Activated CD8-positive, alpha-beta T cell treated with anti-CD3 and anti-CD28 coated beads for 36 hours (primary cell): ENCODE measurements at regions of chr3 and their contacts with region 1.

Region 1: DNA sequence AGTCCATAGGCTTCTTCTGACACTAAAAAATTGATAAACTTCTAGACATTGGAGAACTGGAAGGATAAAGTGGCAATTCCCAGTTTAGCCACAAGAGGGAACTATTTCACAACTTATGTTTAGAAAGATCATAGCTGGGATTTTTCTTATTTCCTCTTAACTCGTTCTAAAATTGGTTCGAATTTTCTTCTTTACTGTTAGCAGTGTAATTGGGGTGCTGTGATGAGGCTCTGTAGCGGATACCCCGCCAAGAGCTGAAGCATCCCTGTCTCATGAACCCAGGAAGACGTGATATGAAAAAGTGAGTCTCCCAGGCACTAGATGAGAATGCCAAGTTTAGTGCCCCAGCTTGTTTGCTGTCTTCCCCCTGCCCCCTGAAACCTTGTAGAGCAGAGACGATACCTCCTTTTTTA is 85.1 kb downstream of the PDCD6IP start:
- DNase-seq: peak; percentile 5
- ATAC-seq: peak; percentile 29
- H3K4me3 Mint-ChIP-seq: no peak overlapping the region
- H3K27ac Mint-ChIP-seq: no peak overlapping the region
- H3K4me1 Mint-ChIP-seq: peaks cover 4% of the 10 kb centered on the region
- H3K27me3 Mint-ChIP-seq: peaks cover 5% of the 10 kb centered on the region
- CTCF ChIP-seq: peak; percentile 86

Region 2: GRCh38 chr3:33855884-33856546 is 27.5 kb before region 1 on chr3:
- CTCF ChIA-PET with region 1: interaction called, 13 read pairs
- POLR2A ChIA-PET with region 1: no interaction called
- intact Hi-C with region 1: no loop called
- DNase-seq: peak; percentile 4
- ATAC-seq: peak; percentile 17
- H3K4me3 Mint-ChIP-seq: no peak overlapping the region
- H3K27ac Mint-ChIP-seq: peak overlapping the region; percentile 81
- H3K4me1 Mint-ChIP-seq: peaks cover 27% of the 10 kb centered on the region
- H3K27me3 Mint-ChIP-seq: no peaks in the 10 kb centered on the region
- CTCF ChIP-seq: no peak

Region 3: GRCh38 chr3:33897306-33897705 is 13.8 kb after region 1 on chr3:
- CTCF ChIA-PET with region 1: interaction called, 16 read pairs
- POLR2A ChIA-PET with region 1: no interaction called
- intact Hi-C with region 1: no loop called
- DNase-seq: no peak
- ATAC-seq: no peak
- H3K4me3 Mint-ChIP-seq: no peak overlapping the region
- H3K27ac Mint-ChIP-seq: no peak overlapping the region
- H3K4me1 Mint-ChIP-seq: no peaks in the 10 kb centered on the region
- H3K27me3 Mint-ChIP-seq: no peaks in the 10 kb centered on the region
- CTCF ChIP-seq: no peak

Region 4: GRCh38 chr3:34015204-34016142 is 131.9 kb after region 1 on chr3:
- CTCF ChIA-PET with region 1: interaction called, 16 read pairs
- POLR2A ChIA-PET with region 1: interaction called, 3 read pairs
- intact Hi-C with region 1: loop called (anchors 2 kb)
- DNase-seq: peak; percentile 24
- ATAC-seq: no peak
- H3K4me3 Mint-ChIP-seq: no peak overlapping the region
- H3K27ac Mint-ChIP-seq: no peak overlapping the region
- H3K4me1 Mint-ChIP-seq: peaks cover 28% of the 10 kb centered on the region
- H3K27me3 Mint-ChIP-seq: no peaks in the 10 kb centered on the region
- CTCF ChIP-seq: peak; percentile 17

Region 5: DNA sequence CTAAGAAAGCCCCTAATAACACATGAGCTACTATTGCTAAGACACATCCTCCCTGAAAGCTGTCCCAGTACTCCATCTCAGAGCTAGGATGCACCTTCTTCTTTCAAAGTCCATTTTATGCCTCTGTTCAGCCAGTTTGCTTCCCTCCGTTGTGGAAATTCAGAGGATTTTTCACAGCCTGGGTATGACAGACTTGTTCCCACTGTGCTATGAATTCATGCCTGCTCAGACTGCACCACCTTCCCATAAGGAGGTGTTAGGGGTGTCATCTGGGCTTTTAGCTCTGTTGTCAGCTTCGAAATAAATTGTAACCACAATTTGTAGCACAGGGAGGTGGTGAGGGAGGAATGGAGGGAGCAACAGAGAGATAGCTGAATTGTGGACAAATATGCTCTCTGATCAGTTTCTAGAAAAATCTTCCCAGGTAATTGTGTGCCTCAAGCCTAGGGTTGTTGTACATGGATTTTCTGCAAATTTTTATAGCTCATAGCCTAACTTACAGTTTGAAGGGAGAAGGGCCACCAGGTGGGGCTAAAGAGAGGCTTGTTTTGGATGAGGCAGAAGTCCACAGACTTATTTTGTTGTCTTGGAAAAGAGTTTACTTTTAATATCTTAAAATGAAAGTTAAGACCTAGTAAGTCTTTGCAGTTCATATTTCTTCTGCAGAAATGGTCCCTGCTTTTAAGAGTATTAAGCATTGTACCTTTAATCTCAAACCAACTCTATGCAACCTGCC is 376.9 kb after region 1 on chr3:
- CTCF ChIA-PET with region 1: interaction called, 13 read pairs
- POLR2A ChIA-PET with region 1: no interaction called
- intact Hi-C with region 1: no loop called
- DNase-seq: peak; percentile 75
- ATAC-seq: no peak
- H3K4me3 Mint-ChIP-seq: no peak overlapping the region
- H3K27ac Mint-ChIP-seq: no peak overlapping the region
- H3K4me1 Mint-ChIP-seq: peaks cover 16% of the 10 kb centered on the region
- H3K27me3 Mint-ChIP-seq: no peaks in the 10 kb centered on the region
- CTCF ChIP-seq: no peak

Region 6: DNA sequence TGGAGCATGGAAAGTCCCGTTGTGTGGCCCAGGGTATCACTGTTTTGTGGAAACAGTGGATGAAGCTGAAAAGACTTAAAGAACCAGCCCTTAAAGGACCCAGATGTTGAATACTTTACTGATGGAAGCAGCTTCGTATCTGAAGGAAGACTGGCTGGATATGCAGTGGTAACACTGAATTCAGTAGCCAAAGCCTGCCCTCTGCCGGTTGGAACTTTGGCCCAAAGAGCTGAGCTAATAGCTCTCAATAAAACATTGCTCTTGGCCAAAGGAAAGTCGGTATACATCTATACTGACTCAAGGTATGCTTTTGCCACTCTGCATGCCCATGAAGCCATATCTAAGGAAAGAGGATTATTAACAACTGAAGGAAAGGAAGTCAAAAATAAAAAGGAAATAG is 800.3 kb after region 1 on chr3:
- CTCF ChIA-PET with region 1: interaction called, 22 read pairs
- POLR2A ChIA-PET with region 1: no interaction called
- intact Hi-C with region 1: loop called (anchors 10 kb)
- DNase-seq: peak; percentile 62
- ATAC-seq: no peak
- H3K4me3 Mint-ChIP-seq: no peak overlapping the region
- H3K27ac Mint-ChIP-seq: no peak overlapping the region
- H3K4me1 Mint-ChIP-seq: no peaks in the 10 kb centered on the region
- H3K27me3 Mint-ChIP-seq: no peaks in the 10 kb centered on the region
- CTCF ChIP-seq: peak; percentile 34